ENCODE measurements at regions of chr11 and their contacts with region 1.

Region 1: GRCh38 chr11:76919887-76920746 is 59.4 kb downstream of the ACER3 start:
- DNase-seq: peak; percentile 82
- ATAC-seq: peak; percentile 74
- H3K4me3 ChIP-seq: peak overlapping the region; percentile 2 to 62 (median 41)
- H3K4me3 Mint-ChIP-seq: peak overlapping the region; percentile 75
- H3K27ac ChIP-seq: no peak overlapping the region
- H3K27ac Mint-ChIP-seq: no peak overlapping the region
- H3K4me1 ChIP-seq: peaks cover 6 to 8% of the 10 kb centered on the region in 2 donors
- H3K4me1 Mint-ChIP-seq: peaks cover 9% of the 10 kb centered on the region
- H3K27me3 ChIP-seq: no peaks in the 10 kb centered on the region
- H3K27me3 Mint-ChIP-seq: no peaks in the 10 kb centered on the region
- CTCF ChIP-seq: peak; percentile 93

Region 2: GRCh38 chr11:76768088-76768908 is 151.8 kb before region 1 on chr11:
- CTCF ChIA-PET with region 1: no interaction called
- POLR2A ChIA-PET with region 1: no interaction called
- intact Hi-C with region 1: no loop called
- DNase-seq: no peak
- ATAC-seq: no peak
- H3K4me3 ChIP-seq: no peak overlapping the region
- H3K4me3 Mint-ChIP-seq: no peak overlapping the region
- H3K27ac ChIP-seq: no peak overlapping the region
- H3K27ac Mint-ChIP-seq: no peak overlapping the region
- H3K4me1 ChIP-seq: no peaks in the 10 kb centered on the region
- H3K4me1 Mint-ChIP-seq: no peaks in the 10 kb centered on the region
- H3K27me3 ChIP-seq: peaks cover 0 to 7% (median 0%) of the 10 kb centered on the region in 4 experiments
- H3K27me3 Mint-ChIP-seq: peaks cover 36% of the 10 kb centered on the region
- CTCF ChIP-seq: no peak

Region 3: GRCh38 chr11:76799066-76799804 is 120.9 kb before region 1 on chr11:
- CTCF ChIA-PET with region 1: interaction called, 70 read pairs
- POLR2A ChIA-PET with region 1: no interaction called
- intact Hi-C with region 1: no loop called
- DNase-seq: peak; percentile 78
- ATAC-seq: peak; percentile 95
- H3K4me3 ChIP-seq: peak overlapping the region in 4 of 5 experiments; percentile 23 to 45 (median 40)
- H3K4me3 Mint-ChIP-seq: peak overlapping the region; percentile 64
- H3K27ac ChIP-seq: no peak overlapping the region
- H3K27ac Mint-ChIP-seq: no peak overlapping the region
- H3K4me1 ChIP-seq: peaks cover 5 to 10% of the 10 kb centered on the region in 2 donors
- H3K4me1 Mint-ChIP-seq: peaks cover 11% of the 10 kb centered on the region
- H3K27me3 ChIP-seq: peaks cover 0 to 13% (median 1%) of the 10 kb centered on the region in 4 experiments
- H3K27me3 Mint-ChIP-seq: peaks cover 25% of the 10 kb centered on the region
- CTCF ChIP-seq: peak; percentile 93

Region 4: GRCh38 chr11:76860539-76861475 is 59.3 kb before region 1 on chr11 and contains the start of gene ACER3:
- CTCF ChIA-PET with region 1: interaction called, 3 read pairs
- POLR2A ChIA-PET with region 1: no interaction called
- intact Hi-C with region 1: loop called (anchors 5 kb)
- DNase-seq: peak; percentile 90
- ATAC-seq: peak; percentile 99
- H3K4me3 ChIP-seq: peak within 1 kb of the TSS; percentile 32 to 81 (median 80)
- H3K4me3 Mint-ChIP-seq: peak within 1 kb of the TSS; percentile 92
- H3K27ac ChIP-seq: peak within 1 kb of the TSS; percentile 69 to 87
- H3K27ac Mint-ChIP-seq: peak within 1 kb of the TSS; percentile 81
- H3K4me1 ChIP-seq: peaks cover 19 to 22% of the 10 kb centered on the region in 2 donors
- H3K4me1 Mint-ChIP-seq: peaks cover 28% of the 10 kb centered on the region
- H3K27me3 ChIP-seq: no peaks in the 10 kb centered on the region
- H3K27me3 Mint-ChIP-seq: no peaks in the 10 kb centered on the region
- CTCF ChIP-seq: no peak
- total RNA-seq, gene ACER3: 11.3 and 12.9 TPM in 2 replicates

Region 5: GRCh38 chr11:76903329-76903728 is 16.8 kb before region 1 on chr11:
- CTCF ChIA-PET with region 1: interaction called, 35 read pairs
- POLR2A ChIA-PET with region 1: no interaction called
- intact Hi-C with region 1: no loop called
- DNase-seq: no peak
- ATAC-seq: no peak
- H3K4me3 ChIP-seq: no peak overlapping the region
- H3K4me3 Mint-ChIP-seq: no peak overlapping the region
- H3K27ac ChIP-seq: no peak overlapping the region
- H3K27ac Mint-ChIP-seq: no peak overlapping the region
- H3K4me1 ChIP-seq: no peaks in the 10 kb centered on the region
- H3K4me1 Mint-ChIP-seq: no peaks in the 10 kb centered on the region
- H3K27me3 ChIP-seq: no peaks in the 10 kb centered on the region
- H3K27me3 Mint-ChIP-seq: no peaks in the 10 kb centered on the region
- CTCF ChIP-seq: no peak

Region 6: GRCh38 chr11:77091146-77091940 is 171.2 kb after region 1 on chr11:
- CTCF ChIA-PET with region 1: interaction called, 45 read pairs
- POLR2A ChIA-PET with region 1: no interaction called
- intact Hi-C with region 1: loop called (anchors 1 kb)
- DNase-seq: peak; percentile 75
- ATAC-seq: peak; percentile 91
- H3K4me3 ChIP-seq: no peak overlapping the region
- H3K4me3 Mint-ChIP-seq: no peak overlapping the region
- H3K27ac ChIP-seq: no peak overlapping the region
- H3K27ac Mint-ChIP-seq: no peak overlapping the region
- H3K4me1 ChIP-seq: no peaks in the 10 kb centered on the region
- H3K4me1 Mint-ChIP-seq: no peaks in the 10 kb centered on the region
- H3K27me3 ChIP-seq: no peaks in the 10 kb centered on the region
- H3K27me3 Mint-ChIP-seq: no peaks in the 10 kb centered on the region
- CTCF ChIP-seq: peak; percentile 84